HepG2 (cell line): ENCODE measurements at regions of chr7 and their contacts with region 1.

Region 1: DNA sequence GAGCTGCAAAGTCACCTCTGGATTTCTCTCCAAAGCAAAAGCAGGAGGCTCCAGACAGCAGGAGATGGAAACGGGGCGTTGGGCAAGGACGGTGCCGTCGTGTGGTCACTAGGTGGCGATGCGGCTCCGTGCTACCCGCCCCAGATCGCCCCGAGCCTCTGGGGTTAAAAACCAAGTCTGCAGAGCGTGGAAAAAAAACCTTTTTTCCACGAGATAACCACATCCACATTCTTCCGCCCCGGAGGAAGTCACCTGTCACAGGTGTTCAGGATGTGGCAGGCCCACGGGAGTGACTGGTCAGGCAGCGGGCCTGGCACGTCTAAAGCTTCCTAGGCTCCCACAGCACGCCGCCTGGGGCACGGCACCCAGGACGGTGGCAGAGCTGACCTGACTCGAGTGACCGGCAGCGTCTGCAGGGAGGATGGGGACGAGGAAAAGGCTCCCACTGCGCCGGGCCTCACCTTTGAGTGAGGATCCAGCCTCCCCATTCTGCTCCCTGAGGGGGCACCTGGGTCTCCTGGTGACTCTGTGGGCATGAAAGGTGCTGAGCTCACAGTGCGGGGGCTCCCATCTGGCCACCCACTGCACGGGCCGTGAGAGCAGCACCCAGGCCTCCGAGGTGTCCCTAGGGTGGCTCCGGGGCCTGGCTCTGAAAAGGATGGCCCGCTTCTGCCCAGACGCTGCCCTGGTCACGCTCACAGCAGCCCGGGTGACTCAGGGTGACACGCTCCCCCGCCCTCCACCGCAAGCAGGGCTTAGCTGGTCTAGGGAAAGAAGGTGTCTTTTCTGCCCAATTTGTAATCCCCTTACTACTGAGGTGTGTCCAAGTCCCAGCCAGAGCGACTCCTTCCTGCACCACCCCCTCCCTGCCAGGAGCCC is 71.3 kb upstream of the TNRC18 start:
- DNase-seq: peak; percentile 60
- ATAC-seq: peak; percentile 89
- H3K4me3 ChIP-seq: no peak overlapping the region
- H3K27ac ChIP-seq: no peak overlapping the region
- H3K4me1 ChIP-seq: no peaks in the 10 kb centered on the region
- H3K27me3 ChIP-seq: no peaks in the 10 kb centered on the region; a peak in 1 of 5 replicates
- CTCF ChIP-seq: peak; percentile 96
- EP300 ChIP-seq: no peak
- POLR2A ChIP-seq: no peak
- RAD21 ChIP-seq: peak; percentile 97

Region 2: DNA sequence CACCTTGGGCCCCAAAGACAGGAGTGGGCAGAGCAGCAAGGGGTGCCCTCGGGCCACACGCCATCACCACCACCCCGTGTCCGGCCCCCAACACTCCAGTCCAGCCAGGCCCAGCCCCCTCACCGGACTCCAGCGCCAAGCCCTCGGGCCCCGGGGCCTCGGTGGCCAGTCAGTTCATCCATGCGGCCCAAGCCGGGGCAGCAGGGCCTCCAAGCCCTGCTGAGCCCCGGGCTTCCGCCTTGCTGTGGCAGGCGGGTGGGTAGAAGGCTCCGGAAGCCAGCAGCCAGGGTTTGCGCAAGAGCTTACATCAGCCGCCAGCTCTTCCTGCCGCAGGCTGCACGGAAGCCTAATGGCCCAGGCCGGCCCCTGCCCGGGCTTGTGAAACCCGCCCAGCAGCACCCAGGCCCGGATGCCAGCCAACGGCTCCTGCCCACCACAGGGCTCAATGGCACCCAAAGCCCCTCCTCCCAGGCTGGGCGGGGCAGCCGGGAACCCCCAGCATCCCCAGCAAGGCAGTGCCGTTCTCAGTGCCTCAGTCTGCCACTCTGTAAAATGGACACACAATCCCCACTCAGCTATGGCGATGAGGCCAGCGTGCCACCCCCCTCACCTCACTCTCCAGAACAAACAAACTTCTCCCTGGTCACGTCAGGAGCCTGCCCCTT is 97.8 kb before region 1 on chr7:
- CTCF ChIA-PET with region 1: no interaction called
- POLR2A ChIA-PET with region 1: no interaction called
- in situ Hi-C with region 1: no loop called
- intact Hi-C with region 1: no loop called
- DNase-seq: peak; percentile 29
- ATAC-seq: peak; percentile 59
- H3K4me3 ChIP-seq: no peak overlapping the region
- H3K27ac ChIP-seq: no peak overlapping the region
- H3K4me1 ChIP-seq: no peaks in the 10 kb centered on the region
- H3K27me3 ChIP-seq: no peaks in the 10 kb centered on the region
- CTCF ChIP-seq: no peak
- EP300 ChIP-seq: no peak
- POLR2A ChIP-seq: no peak
- RAD21 ChIP-seq: no peak

Region 3: DNA sequence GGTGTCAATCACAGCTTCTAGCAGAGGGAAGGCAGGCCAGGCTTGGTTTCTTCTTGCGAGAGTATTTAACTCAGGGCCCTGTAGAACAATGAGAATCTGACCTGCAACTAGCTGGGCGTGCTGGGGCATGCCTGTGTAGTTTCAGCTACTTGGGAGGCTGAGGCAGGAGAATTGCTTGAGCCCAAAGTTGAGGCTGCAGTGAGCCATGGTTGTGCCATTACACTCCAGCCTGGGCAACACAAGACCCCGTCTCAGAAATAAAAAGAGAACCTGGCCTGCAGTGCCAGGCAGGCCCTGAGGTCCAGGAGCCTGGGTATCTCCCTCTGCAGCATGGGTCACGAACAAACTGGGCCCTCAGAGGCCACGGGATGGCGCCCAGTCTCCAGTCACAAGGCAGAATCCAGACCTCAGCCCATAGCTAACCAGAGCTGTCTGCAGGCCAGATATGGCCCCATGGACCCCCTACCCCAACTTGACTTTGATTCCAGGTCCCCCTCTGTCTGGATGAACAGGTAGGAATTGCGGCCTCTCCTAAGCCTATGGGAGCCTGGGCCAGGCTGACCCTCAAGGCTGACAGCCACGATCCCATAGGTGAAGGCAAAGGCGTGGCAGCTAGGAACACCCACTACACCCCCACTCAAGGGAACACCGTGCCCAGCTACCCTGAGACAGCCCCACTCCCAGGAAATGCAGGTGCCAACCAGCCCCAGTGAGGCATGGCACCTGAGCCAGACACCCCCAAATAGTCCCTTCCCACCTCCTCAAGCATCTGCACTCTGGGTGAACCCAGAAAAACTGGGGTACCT is 31.4 kb after region 1 on chr7:
- CTCF ChIA-PET with region 1: no interaction called
- POLR2A ChIA-PET with region 1: interaction called, 11 read pairs
- in situ Hi-C with region 1: no loop called
- intact Hi-C with region 1: no loop called
- DNase-seq: peak; percentile 57
- ATAC-seq: peak; percentile 6
- H3K4me3 ChIP-seq: no peak overlapping the region
- H3K27ac ChIP-seq: peak overlapping the region; percentile 38
- H3K4me1 ChIP-seq: peaks cover 21% of the 10 kb centered on the region
- H3K27me3 ChIP-seq: no peaks in the 10 kb centered on the region
- CTCF ChIP-seq: peak; percentile 70
- EP300 ChIP-seq: no peak
- POLR2A ChIP-seq: peak in 1 of 2 experiments; percentile 76; a peak in 2 of 4 replicates
- RAD21 ChIP-seq: peak; percentile 31

Region 4: GRCh38 chr7:5557920-5558401 is 63.0 kb after region 1 on chr7:
- CTCF ChIA-PET with region 1: interaction called, 23 read pairs
- POLR2A ChIA-PET with region 1: interaction called, 10 read pairs
- in situ Hi-C with region 1: no loop called
- intact Hi-C with region 1: loop called (anchors 1 kb)
- DNase-seq: peak; percentile 63
- ATAC-seq: peak; percentile 49
- H3K4me3 ChIP-seq: peak overlapping the region; percentile 48 to 68 (median 55); a peak in 5 of 6 replicates
- H3K27ac ChIP-seq: peak overlapping the region; percentile 87
- H3K4me1 ChIP-seq: peaks cover 54% of the 10 kb centered on the region
- H3K27me3 ChIP-seq: no peaks in the 10 kb centered on the region
- CTCF ChIP-seq: no peak
- EP300 ChIP-seq: no peak
- POLR2A ChIP-seq: peak in 1 of 2 experiments; percentile 19; a peak in 1 of 4 replicates
- RAD21 ChIP-seq: no peak

Region 5: DNA sequence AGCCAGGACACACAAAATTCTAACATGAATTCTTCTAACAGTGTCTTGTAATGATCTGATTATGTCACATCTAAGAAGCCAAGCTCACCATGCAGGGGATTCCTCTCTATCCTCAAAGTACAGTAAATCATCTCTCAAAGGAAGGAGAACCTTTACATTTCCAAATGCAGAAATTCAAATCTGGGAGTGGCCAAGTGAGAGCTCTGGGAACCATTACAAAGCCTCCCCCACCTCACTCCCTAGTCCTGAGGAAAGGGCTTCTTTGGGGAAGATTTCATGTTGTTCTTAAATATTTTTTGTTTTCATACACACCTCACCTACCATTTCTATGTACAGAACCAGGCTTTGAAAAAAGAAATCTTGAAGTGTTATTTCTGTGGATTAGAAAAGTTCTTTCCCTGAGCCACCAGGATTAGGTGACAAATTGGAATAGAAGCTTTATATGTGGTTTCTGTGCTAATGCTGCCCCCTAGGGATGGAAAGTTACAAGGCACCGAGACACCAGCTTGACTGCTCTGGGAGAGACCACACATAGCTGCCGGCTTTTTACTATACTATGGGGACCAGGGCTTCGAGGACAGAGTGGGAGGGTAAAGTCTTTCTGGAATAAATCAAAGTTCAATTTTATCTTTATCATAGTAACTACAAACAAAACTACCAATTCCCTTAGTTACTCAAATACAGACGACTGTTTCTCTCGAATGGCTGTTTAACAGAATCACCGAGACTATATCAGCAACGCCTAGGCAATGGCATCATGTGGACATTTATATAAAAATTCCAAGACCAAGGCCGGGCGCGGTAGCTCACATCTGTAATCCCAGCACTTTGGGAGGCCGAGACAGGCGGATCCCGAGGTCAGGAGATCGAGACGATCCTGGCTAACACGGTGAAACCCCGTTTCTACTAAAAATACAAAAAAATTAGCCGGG is 170.4 kb after region 1 on chr7:
- CTCF ChIA-PET with region 1: interaction called, 11 read pairs
- POLR2A ChIA-PET with region 1: interaction called, 6 read pairs
- in situ Hi-C with region 1: loop called (anchors 5 kb)
- intact Hi-C with region 1: loop called (anchors 5 kb)
- DNase-seq: peak; percentile 76
- ATAC-seq: peak; percentile 92
- H3K4me3 ChIP-seq: no peak overlapping the region
- H3K27ac ChIP-seq: no peak overlapping the region
- H3K4me1 ChIP-seq: peaks cover 3% of the 10 kb centered on the region
- H3K27me3 ChIP-seq: no peaks in the 10 kb centered on the region
- CTCF ChIP-seq: peak; percentile 84
- EP300 ChIP-seq: no peak
- POLR2A ChIP-seq: no peak
- RAD21 ChIP-seq: peak; percentile 71

Region 6: GRCh38 chr7:5704534-5704922 is 209.6 kb after region 1 on chr7:
- CTCF ChIA-PET with region 1: interaction called, 11 read pairs
- POLR2A ChIA-PET with region 1: no interaction called
- in situ Hi-C with region 1: no loop called
- intact Hi-C with region 1: loop called (anchors 10 kb)
- DNase-seq: peak; percentile 75
- ATAC-seq: peak; percentile 88
- H3K4me3 ChIP-seq: no peak overlapping the region
- H3K27ac ChIP-seq: no peak overlapping the region
- H3K4me1 ChIP-seq: peaks cover 7% of the 10 kb centered on the region; the same call in 1 of the 2 replicates
- H3K27me3 ChIP-seq: no peaks in the 10 kb centered on the region
- CTCF ChIP-seq: peak; percentile 91
- EP300 ChIP-seq: no peak
- POLR2A ChIP-seq: no peak
- RAD21 ChIP-seq: peak; percentile 70

Region 7: DNA sequence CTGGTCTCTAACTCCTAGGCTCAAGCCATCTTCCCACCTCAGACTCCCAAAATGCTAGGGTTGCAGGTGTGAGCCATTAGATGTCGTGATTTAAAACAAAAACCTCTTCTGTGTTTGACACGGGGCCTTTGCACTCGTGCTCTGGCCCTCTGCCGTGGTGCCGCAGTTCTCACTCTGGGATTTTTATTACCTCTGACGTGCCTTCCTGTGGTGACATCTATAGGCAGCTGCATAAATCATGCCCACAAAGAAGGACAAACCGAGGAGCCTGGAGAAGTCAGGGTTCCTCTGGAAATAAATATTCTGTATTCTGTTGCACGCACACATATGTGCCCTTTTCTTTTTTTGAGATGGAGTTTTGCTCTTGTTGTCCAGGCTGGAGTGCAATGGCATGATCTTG is 359.8 kb after region 1 on chr7:
- CTCF ChIA-PET with region 1: no interaction called
- POLR2A ChIA-PET with region 1: no interaction called
- in situ Hi-C with region 1: no loop called
- intact Hi-C with region 1: no loop called
- DNase-seq: no peak
- ATAC-seq: no peak
- H3K4me3 ChIP-seq: no peak overlapping the region
- H3K27ac ChIP-seq: no peak overlapping the region
- H3K4me1 ChIP-seq: peaks cover 24% of the 10 kb centered on the region
- H3K27me3 ChIP-seq: no peaks in the 10 kb centered on the region
- CTCF ChIP-seq: no peak
- EP300 ChIP-seq: no peak
- POLR2A ChIP-seq: no peak
- RAD21 ChIP-seq: no peak